GM10248 (cell line): ENCODE measurements at regions of chr3 and their contacts with region 1.

Region 1: DNA sequence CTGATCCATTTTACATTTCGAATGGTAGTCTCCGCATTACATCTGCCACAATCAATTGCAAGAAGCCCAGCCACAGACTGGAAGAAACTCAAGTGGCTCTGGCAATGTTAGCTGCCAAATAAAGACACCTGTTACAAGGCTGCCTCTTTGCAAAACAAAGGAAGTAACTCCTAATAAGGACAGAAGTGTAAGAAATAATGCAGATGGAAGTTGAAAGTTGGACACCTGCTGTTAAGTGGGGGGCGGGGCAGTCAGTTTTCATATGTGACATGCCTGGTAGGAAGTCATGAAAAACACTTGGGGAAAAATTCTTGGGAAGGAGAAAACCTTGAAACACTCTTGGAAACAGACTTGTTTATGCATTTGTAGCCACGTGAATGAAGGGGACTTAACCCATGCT is 54.1 kb upstream of the ATP2C1 start:
- DNase-seq: peak; percentile 25
- CTCF ChIP-seq: no peak

Region 2: DNA sequence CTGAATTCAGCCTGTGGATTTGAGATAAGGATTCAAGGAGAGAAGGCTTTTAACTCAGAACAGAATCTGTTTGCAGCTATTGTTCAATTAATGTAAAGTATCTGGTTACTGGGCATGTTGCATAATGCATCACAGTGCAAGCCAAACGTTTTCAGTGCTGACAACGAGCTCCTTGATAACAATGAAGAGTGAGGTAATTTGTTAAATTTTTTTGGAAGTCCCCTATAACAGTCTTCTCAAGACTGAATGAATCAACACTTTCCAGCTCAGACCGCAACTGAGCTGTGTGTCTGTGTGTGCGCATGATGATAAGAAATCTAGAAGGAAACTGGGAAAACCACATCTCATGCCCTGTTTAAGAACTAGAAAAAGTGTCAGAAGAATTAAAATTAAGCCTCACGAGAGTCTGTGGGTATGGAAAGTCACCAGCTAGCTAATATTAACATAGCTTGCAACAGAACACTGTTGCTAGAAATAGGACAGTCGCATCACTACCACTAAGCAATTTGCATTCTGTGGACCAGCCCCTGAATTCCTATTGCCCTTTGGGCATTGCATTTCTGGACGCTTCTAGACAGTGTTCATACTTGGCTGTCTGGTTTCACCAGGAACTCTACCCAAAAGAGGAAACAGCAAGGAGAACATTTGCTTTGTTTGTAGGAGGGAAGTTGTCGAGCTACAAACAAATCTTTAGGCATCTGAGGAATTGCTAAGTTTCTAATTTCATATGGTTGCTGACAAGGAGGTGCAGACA is 10.4 kb after region 1 on chr3:
- CTCF ChIA-PET with region 1: interaction called, 15 read pairs
- POLR2A ChIA-PET with region 1: interaction called, 3 read pairs
- DNase-seq: peak; percentile 42
- CTCF ChIP-seq: no peak

Region 3: GRCh38 chr3:130865489-130865888 is 25.7 kb after region 1 on chr3:
- CTCF ChIA-PET with region 1: no interaction called
- POLR2A ChIA-PET with region 1: no interaction called
- DNase-seq: no peak
- CTCF ChIP-seq: no peak